ENCODE measurements at regions of chr16 and their contacts with region 1.

Region 1: DNA sequence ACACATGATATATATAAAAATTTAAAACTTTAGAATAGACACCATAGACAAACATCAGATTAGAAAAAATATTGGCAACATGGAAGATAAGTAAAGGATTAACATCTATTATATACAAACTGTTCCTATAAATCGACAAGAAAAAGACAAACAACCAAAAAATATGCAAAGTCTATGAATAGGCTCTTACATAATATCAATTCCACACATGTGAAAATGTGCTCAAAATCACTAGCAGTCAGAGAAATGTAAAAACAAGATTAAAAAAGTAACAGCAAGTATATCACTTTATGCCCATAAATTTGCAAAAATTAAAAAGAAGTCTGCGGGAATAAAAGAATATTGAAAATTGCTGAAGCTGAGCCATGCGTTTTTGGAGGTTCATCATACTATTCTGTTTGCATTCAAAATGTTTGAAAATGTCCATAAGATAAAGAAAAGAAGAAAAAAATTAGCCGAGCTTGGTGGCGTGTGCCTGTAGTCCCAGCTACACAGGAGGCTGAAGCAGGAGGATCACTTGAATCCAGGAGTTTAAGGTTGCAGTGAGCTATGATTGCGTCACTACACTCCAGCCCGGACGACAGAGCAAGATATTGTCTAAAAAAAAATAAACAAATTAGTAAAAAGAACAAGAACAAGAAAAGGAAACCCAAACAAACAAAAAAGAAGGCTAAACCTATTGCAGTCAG is 11.2 kb upstream of the ERN2 start:
- DNase-seq: no peak
- ATAC-seq: no peak
- H3K4me3 Mint-ChIP-seq: no peak overlapping the region
- H3K27ac Mint-ChIP-seq: no peak overlapping the region
- H3K4me1 Mint-ChIP-seq: peaks cover 2% of the 10 kb centered on the region
- H3K27me3 Mint-ChIP-seq: peaks cover 17% of the 10 kb centered on the region
- CTCF ChIP-seq: no peak

Region 2: DNA sequence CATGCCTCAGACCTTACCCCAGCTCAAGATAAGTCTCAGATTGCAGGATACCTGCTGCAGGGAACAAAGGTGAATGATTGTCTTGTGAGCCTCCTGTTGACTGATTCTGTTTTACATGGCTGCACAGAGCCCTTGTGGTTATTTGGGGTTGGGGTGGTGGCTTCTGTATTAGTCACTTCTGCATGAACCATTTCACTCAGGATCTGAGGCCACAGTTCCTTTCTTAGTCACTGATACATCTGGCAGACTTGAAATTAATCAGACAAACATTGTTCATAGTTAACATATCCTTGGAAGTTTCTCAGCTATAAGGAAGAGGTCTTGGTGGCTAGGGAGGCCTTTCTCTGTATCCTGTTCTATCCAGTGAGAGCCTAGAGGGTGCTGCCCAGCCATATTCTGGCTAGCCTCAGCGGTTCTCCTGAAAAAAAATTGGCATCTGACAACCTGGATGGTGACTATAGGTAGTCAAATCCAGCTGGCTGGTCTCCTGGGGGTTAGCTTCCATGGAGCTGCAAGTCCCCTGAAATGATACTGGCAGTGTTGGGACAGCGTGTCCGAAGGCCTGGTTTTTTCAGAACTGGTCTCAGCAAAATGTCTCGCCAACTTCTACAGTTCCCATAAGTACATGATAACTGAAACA is 54.0 kb before region 1 on chr16:
- CTCF ChIA-PET with region 1: no interaction called
- POLR2A ChIA-PET with region 1: no interaction called
- intact Hi-C with region 1: no loop called
- DNase-seq: no peak
- ATAC-seq: peak; percentile 96
- H3K4me3 Mint-ChIP-seq: peak overlapping the region; percentile 56
- H3K27ac Mint-ChIP-seq: peak overlapping the region; percentile 6
- H3K4me1 Mint-ChIP-seq: peaks cover 24% of the 10 kb centered on the region
- H3K27me3 Mint-ChIP-seq: no peaks in the 10 kb centered on the region
- CTCF ChIP-seq: no peak

Region 3: GRCh38 chr16:23712976-23713375 is 11.3 kb before region 1 on chr16 and contains the start of gene ERN2:
- CTCF ChIA-PET with region 1: no interaction called
- POLR2A ChIA-PET with region 1: interaction called, 11 read pairs
- intact Hi-C with region 1: no loop called
- DNase-seq: no peak
- ATAC-seq: no peak
- H3K4me3 Mint-ChIP-seq: no peak within 1 kb of the TSS
- H3K27ac Mint-ChIP-seq: no peak within 1 kb of the TSS
- H3K4me1 Mint-ChIP-seq: no peaks in the 10 kb centered on the region
- H3K27me3 Mint-ChIP-seq: peaks cover 49% of the 10 kb centered on the region
- CTCF ChIP-seq: no peak
- total RNA-seq, gene ERN2: not detected in 2 replicates

Region 4: DNA sequence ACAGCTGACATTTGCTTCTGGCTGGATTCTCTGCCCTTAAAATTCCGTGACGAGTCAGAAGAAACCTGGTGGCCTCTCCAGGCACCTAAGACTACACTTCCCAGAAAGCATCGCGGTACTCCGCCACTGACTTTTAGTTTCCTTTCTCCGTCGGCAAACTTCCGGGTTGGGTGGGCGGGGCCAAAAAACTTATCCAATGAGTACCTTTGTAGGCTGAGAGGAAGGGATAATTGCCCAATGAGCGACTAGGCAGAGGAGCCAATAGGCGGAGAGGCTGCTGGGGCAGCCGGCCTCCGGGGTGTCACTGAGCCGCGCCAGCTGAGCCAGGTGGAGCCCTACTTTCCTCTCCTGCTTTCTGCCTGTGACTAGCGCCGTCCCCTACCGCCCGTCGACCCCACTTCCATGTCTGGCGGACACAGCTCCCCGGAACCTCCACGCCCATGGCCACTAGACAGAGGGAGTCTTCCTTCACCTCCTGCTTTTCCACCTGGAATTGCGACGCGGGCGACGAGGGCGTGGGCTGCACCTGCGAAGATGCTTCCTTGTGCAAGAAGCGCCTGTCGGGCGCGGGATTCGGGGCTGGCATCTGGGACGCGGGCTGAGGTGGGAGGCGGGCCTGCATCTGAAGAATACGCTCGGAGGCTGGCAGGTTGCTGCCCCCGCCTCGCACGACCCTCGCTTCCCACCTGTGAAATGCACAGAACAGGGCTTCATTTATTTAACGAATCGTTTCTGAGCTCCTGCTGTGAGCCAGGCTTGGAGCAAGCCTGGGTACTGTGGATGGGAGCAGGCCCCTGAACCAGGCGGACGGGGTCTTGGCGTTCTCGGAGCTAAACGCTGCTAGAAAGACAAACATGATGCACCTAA is 1307.4 kb after region 1 on chr16:
- CTCF ChIA-PET with region 1: no interaction called
- POLR2A ChIA-PET with region 1: no interaction called
- intact Hi-C with region 1: no loop called
- DNase-seq: peak; percentile 69
- ATAC-seq: peak; percentile 95
- H3K4me3 Mint-ChIP-seq: peak overlapping the region; percentile 95
- H3K27ac Mint-ChIP-seq: peak overlapping the region; percentile 90
- H3K4me1 Mint-ChIP-seq: peaks cover 50% of the 10 kb centered on the region
- H3K27me3 Mint-ChIP-seq: no peaks in the 10 kb centered on the region
- CTCF ChIP-seq: no peak